Right lobe of liver (tissue), 6 donors: ENCODE measurements at regions of chr5 and their contacts with region 1.

Region 1: GRCh38 chr5:115246361-115246991 is 16.2 kb downstream of the PGGT1B start:
- DNase-seq: no peak
- ATAC-seq: peak; percentile 81 to 89 (median 84)
- H3K4me3 ChIP-seq: no peak overlapping the region
- H3K27ac ChIP-seq: no peak overlapping the region
- H3K4me1 ChIP-seq: peaks cover 0 to 8% (median 5%) of the 10 kb centered on the region in 4 donors
- H3K27me3 ChIP-seq: no peaks in the 10 kb centered on the region
- CTCF ChIP-seq: peak; percentile 71 to 80 (median 75)
- POLR2A ChIP-seq: no peak

Region 2: GRCh38 chr5:115098041-115098702 is 148.3 kb before region 1 on chr5:
- intact Hi-C with region 1: loop called in 1 of 2 experiments (anchors 5 kb)
- DNase-seq: no peak
- ATAC-seq: peak; percentile 90 to 97 (median 91)
- H3K4me3 ChIP-seq: no peak overlapping the region
- H3K27ac ChIP-seq: no peak overlapping the region
- H3K4me1 ChIP-seq: no peaks in the 10 kb centered on the region
- H3K27me3 ChIP-seq: no peaks in the 10 kb centered on the region
- CTCF ChIP-seq: peak; percentile 70 to 75 (median 74)
- POLR2A ChIP-seq: no peak

Region 3: DNA sequence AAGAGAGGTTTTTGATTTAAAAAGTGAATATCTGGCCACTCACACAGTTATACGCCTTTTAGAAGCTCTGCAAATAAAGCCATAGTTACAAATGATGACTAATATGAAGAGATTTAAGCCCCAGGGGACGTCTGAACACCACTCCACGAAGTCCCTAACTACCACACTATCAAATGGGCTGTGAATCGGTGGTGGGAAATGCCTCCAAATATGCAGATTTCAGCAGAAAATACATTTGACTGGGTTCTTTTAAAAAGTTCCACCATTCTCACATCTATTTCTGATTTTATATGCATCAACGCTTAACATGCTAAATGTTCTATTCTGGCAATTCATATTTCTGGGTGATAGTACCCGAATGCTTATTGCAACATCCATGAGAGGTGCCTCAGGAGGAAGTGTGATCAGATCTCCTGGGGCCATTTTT is 333.3 kb after region 1 on chr5:
- intact Hi-C with region 1: no loop called
- DNase-seq: no peak
- ATAC-seq: no peak
- H3K4me3 ChIP-seq: no peak overlapping the region
- H3K27ac ChIP-seq: no peak overlapping the region
- H3K4me1 ChIP-seq: no peaks in the 10 kb centered on the region
- H3K27me3 ChIP-seq: no peaks in the 10 kb centered on the region
- CTCF ChIP-seq: no peak
- POLR2A ChIP-seq: no peak